ENCODE measurements at regions of chr12 and their contacts with region 1.

Region 1: GRCh38 chr12:47095446-47096236 is 15.9 kb upstream of the AMIGO2 start:
- DNase-seq: peak; percentile 95
- ATAC-seq: peak; percentile 76
- H3K4me3 ChIP-seq: no peak overlapping the region
- H3K27ac ChIP-seq: no peak overlapping the region
- H3K4me1 ChIP-seq: peaks cover 11% of the 10 kb centered on the region
- H3K27me3 ChIP-seq: no peaks in the 10 kb centered on the region
- CTCF ChIP-seq: no peak
- POLR2A ChIP-seq: no peak
- RAD21 ChIP-seq: no peak

Region 2: DNA sequence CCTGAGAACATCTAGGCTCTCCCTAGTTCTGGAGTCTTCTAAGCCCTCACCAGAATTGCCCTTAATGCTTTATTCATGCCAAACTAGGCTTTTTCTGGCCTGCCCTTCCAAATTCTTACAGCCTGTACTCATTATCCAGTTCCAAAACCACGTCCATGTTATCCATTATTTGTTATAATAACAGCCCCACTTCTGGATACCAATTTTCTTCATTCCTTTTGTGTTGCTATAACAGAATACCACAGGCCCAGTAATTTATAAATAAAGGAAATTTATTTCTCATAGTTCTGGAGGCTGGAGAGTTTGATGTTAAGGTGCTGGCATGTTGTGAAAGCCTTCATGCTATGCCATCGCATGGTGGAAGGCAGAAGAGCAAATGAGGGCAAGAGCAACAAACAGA is 52.1 kb after region 1 on chr12:
- CTCF ChIA-PET with region 1: no interaction called
- POLR2A ChIA-PET with region 1: interaction called, 4 read pairs
- dilution Hi-C with region 1: no loop called
- in situ Hi-C with region 1: no loop called
- intact Hi-C with region 1: loop called (anchors 5 kb)
- DNase-seq: peak; percentile 56
- ATAC-seq: peak; percentile 85
- H3K4me3 ChIP-seq: no peak overlapping the region
- H3K27ac ChIP-seq: no peak overlapping the region
- H3K4me1 ChIP-seq: peaks cover 3% of the 10 kb centered on the region; the same call in 1 of the 2 replicates
- H3K27me3 ChIP-seq: no peaks in the 10 kb centered on the region
- CTCF ChIP-seq: no peak
- POLR2A ChIP-seq: no peak
- RAD21 ChIP-seq: no peak

Region 3: GRCh38 chr12:47302111-47302671 is 206.6 kb after region 1 on chr12:
- CTCF ChIA-PET with region 1: no interaction called
- POLR2A ChIA-PET with region 1: no interaction called
- dilution Hi-C with region 1: no loop called
- in situ Hi-C with region 1: no loop called
- intact Hi-C with region 1: loop called (anchors 5 kb)
- DNase-seq: no peak
- ATAC-seq: no peak
- H3K4me3 ChIP-seq: no peak overlapping the region
- H3K27ac ChIP-seq: no peak overlapping the region
- H3K4me1 ChIP-seq: peaks cover 7% of the 10 kb centered on the region
- H3K27me3 ChIP-seq: no peaks in the 10 kb centered on the region
- CTCF ChIP-seq: no peak
- POLR2A ChIP-seq: no peak
- RAD21 ChIP-seq: no peak

Measured in IMR-90 (cell line).